Right lobe of liver (tissue), 6 donors: ENCODE measurements at regions of chr17 and their contacts with region 1.

Region 1: GRCh38 chr17:74785096-74785980 is 9.2 kb upstream of the NAT9 start:
- DNase-seq: no peak
- ATAC-seq: peak in 1 of 4 donors; percentile 20
- H3K4me3 ChIP-seq: no peak overlapping the region
- H3K27ac ChIP-seq: no peak overlapping the region
- H3K4me1 ChIP-seq: no peaks in the 10 kb centered on the region
- H3K27me3 ChIP-seq: no peaks in the 10 kb centered on the region
- CTCF ChIP-seq: no peak
- POLR2A ChIP-seq: no peak

Region 2: GRCh38 chr17:74712756-74713155 is 72.6 kb before region 1 on chr17 and contains the start of gene CD300LF:
- intact Hi-C with region 1: no loop called
- DNase-seq: peak in 1 of 3 donors; percentile 53
- ATAC-seq: peak; percentile 53 to 84 (median 72)
- H3K4me3 ChIP-seq: peak within 1 kb of the TSS in 1 of 3 donors; percentile 4
- H3K27ac ChIP-seq: no peak within 1 kb of the TSS
- H3K4me1 ChIP-seq: no peaks in the 10 kb centered on the region
- H3K27me3 ChIP-seq: no peaks in the 10 kb centered on the region
- CTCF ChIP-seq: no peak
- POLR2A ChIP-seq: no peak
- total RNA-seq, gene CD300LF: 0.44 to 2.6 (median 0.74) TPM in 5 of 6 experiments, not detected in the other

Region 3: DNA sequence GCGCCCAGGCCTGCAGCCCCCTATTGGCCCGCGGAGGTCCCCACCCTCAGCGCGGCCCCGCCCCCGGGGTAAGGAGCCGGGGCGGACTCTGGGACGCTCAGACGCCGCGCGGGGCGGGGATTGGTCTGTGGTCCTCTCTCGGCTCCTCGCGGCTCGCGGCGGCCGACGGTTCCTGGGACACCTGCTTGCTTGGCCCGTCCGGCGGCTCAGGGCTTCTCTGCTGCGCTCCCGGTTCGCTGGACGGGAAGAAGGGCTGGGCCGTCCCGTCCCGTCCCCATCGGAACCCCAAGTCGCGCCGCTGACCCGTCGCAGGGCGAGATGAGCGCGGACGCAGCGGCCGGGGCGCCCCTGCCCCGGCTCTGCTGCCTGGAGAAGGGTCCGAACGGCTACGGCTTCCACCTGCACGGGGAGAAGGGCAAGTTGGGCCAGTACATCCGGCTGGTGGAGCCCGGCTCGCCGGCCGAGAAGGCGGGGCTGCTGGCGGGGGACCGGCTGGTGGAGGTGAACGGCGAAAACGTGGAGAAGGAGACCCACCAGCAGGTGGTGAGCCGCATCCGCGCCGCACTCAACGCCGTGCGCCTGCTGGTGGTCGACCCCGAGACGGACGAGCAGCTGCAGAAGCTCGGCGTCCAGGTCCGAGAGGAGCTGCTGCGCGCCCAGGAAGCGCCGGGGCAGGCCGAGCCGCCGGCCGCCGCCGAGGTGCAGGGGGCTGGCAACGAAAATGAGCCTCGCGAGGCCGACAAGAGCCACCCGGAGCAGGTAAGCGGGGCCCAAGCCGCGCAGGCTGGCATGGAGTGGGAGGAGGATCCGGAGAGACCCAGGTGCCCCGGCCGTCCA is 36.6 kb before region 1 on chr17 and contains the start of gene NHERF1:
- intact Hi-C with region 1: loop called in 1 of 2 experiments (anchors 5 kb)
- DNase-seq: peak; percentile 97
- ATAC-seq: peak; percentile 63 to 85 (median 71)
- H3K4me3 ChIP-seq: peak within 1 kb of the TSS; percentile 98 to 100 (median 99)
- H3K27ac ChIP-seq: peak within 1 kb of the TSS; percentile 72 to 84 (median 80)
- H3K4me1 ChIP-seq: peaks cover 0 to 45% (median 21%) of the 10 kb centered on the region in 4 donors
- H3K27me3 ChIP-seq: no peaks in the 10 kb centered on the region
- CTCF ChIP-seq: peak in 1 of 4 donors; percentile 17
- POLR2A ChIP-seq: peak; percentile 99
- total RNA-seq, gene NHERF1: 105 to 218 (median 161) TPM